Activated CD4-positive, alpha-beta T cell treated with anti-CD3 and anti-CD28 coated beads for 36 hours (primary cell): ENCODE measurements at regions of chr1 and their contacts with region 1.

Region 1: GRCh38 chr1:35451125-35451528 is 106.1 kb downstream of the KIAA0319L start:
- DNase-seq: peak; percentile 89
- ATAC-seq: peak; percentile 68
- H3K4me3 Mint-ChIP-seq: no peak overlapping the region
- H3K27ac Mint-ChIP-seq: peak overlapping the region; percentile 74
- H3K4me1 Mint-ChIP-seq: peaks cover 41% of the 10 kb centered on the region
- H3K27me3 Mint-ChIP-seq: no peaks in the 10 kb centered on the region

Region 2: GRCh38 chr1:35350872-35351271 is 100.3 kb before region 1 on chr1:
- CTCF ChIA-PET with region 1: interaction called, 12 read pairs
- POLR2A ChIA-PET with region 1: no interaction called
- intact Hi-C with region 1: no loop called
- DNase-seq: no peak
- ATAC-seq: no peak
- H3K4me3 Mint-ChIP-seq: no peak overlapping the region
- H3K27ac Mint-ChIP-seq: no peak overlapping the region
- H3K4me1 Mint-ChIP-seq: peaks cover 3% of the 10 kb centered on the region
- H3K27me3 Mint-ChIP-seq: no peaks in the 10 kb centered on the region

Region 3: DNA sequence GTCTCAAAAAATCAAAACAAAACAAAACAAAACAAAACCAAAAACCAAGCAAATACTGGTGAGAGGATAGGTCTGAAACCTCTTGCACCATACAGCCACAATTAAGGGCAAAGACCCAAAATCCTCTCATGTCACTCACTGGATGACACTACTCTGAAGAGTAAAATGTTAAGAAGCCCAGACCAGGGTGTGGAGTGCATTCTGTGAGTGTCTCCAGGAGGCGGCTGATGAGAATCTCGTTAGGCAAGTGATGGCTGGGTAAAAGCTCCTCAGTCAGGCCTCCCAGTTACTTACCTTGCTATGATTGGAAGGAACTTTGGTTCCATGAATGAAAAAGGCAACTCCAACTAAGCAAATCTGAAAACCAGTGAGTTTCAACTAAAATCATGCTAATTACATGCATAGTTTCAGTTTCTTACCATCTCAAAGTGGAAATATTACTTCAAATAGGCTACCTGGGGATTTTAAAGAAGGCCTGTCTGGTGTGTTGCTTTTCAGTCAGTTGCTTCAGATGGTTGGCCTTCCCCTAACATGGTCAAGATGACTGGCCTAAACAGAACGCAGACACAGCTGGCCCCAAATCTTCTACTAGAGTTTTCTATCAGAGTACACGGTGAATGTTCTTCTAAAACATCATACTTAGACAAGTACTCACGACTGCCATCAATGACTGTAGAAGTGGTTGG is 11.0 kb after region 1 on chr1:
- CTCF ChIA-PET with region 1: interaction called, 25 read pairs
- POLR2A ChIA-PET with region 1: no interaction called
- intact Hi-C with region 1: no loop called
- DNase-seq: peak; percentile 37
- ATAC-seq: peak; percentile 84
- H3K4me3 Mint-ChIP-seq: peak overlapping the region; percentile 20
- H3K27ac Mint-ChIP-seq: peak overlapping the region; percentile 88
- H3K4me1 Mint-ChIP-seq: peaks cover 13% of the 10 kb centered on the region
- H3K27me3 Mint-ChIP-seq: no peaks in the 10 kb centered on the region

Region 4: DNA sequence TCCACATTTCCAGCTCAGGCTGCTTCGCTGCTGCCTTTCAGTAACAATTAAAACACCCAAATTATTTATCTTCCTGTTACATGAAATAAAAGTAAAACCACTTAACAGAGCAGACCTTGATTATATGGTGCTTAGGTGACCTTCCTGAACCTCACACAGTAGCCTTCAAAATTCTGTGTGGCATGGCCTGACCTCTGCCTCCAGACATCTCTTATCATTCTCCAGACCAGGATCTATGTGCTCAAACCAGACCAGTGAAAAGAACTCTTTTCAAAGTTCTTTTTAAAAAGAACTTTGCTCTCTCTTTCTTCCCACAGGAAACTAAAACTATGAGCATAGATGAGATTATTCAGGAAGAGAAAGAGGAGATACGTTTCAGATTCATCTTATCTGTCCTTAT is 68.3 kb after region 1 on chr1:
- CTCF ChIA-PET with region 1: interaction called, 13 read pairs
- POLR2A ChIA-PET with region 1: no interaction called
- intact Hi-C with region 1: no loop called
- DNase-seq: no peak
- ATAC-seq: no peak
- H3K4me3 Mint-ChIP-seq: no peak overlapping the region
- H3K27ac Mint-ChIP-seq: peak overlapping the region; percentile 32
- H3K4me1 Mint-ChIP-seq: peaks cover 32% of the 10 kb centered on the region
- H3K27me3 Mint-ChIP-seq: no peaks in the 10 kb centered on the region

Region 5: GRCh38 chr1:35544978-35545377 is 93.9 kb after region 1 on chr1:
- CTCF ChIA-PET with region 1: interaction called, 54 read pairs
- POLR2A ChIA-PET with region 1: no interaction called
- intact Hi-C with region 1: loop called (anchors 1 kb)
- DNase-seq: peak; percentile 67
- ATAC-seq: peak; percentile 91
- H3K4me3 Mint-ChIP-seq: no peak overlapping the region
- H3K27ac Mint-ChIP-seq: no peak overlapping the region
- H3K4me1 Mint-ChIP-seq: peaks cover 56% of the 10 kb centered on the region
- H3K27me3 Mint-ChIP-seq: no peaks in the 10 kb centered on the region

Region 6: GRCh38 chr1:35577071-35577998 is 126.2 kb after region 1 on chr1:
- CTCF ChIA-PET with region 1: interaction called, 13 read pairs
- POLR2A ChIA-PET with region 1: no interaction called
- intact Hi-C with region 1: no loop called
- DNase-seq: peak; percentile 74
- ATAC-seq: peak; percentile 83
- H3K4me3 Mint-ChIP-seq: peak overlapping the region; percentile 63
- H3K27ac Mint-ChIP-seq: peak overlapping the region; percentile 80
- H3K4me1 Mint-ChIP-seq: peaks cover 20% of the 10 kb centered on the region
- H3K27me3 Mint-ChIP-seq: peaks cover 12% of the 10 kb centered on the region

Region 7: DNA sequence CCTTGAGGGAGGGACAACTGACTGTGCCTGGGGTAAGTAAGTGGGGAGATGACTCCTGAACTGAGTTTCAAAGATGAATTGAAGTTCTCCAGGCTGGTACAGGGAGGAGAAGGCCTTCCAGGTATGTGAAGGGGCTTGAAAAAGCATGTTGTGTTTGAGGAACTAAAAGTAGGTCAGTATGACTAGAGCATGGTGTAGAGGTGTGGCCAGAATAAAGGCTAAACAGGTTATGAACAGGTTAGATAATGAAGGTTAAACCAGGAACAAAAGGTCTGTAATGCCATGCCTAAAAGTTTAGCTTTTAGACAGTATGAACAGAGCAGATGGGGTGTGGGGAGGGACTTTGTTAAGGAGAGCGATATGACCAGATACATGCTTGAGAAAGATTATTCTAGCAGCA is 326.0 kb after region 1 on chr1:
- CTCF ChIA-PET with region 1: interaction called, 20 read pairs
- POLR2A ChIA-PET with region 1: no interaction called
- intact Hi-C with region 1: loop called (anchors 2 to 5 kb)
- DNase-seq: no peak
- ATAC-seq: no peak
- H3K4me3 Mint-ChIP-seq: no peak overlapping the region
- H3K27ac Mint-ChIP-seq: no peak overlapping the region
- H3K4me1 Mint-ChIP-seq: no peaks in the 10 kb centered on the region
- H3K27me3 Mint-ChIP-seq: no peaks in the 10 kb centered on the region